ENCODE measurements at regions of chr7 and their contacts with region 1.

Region 1: DNA sequence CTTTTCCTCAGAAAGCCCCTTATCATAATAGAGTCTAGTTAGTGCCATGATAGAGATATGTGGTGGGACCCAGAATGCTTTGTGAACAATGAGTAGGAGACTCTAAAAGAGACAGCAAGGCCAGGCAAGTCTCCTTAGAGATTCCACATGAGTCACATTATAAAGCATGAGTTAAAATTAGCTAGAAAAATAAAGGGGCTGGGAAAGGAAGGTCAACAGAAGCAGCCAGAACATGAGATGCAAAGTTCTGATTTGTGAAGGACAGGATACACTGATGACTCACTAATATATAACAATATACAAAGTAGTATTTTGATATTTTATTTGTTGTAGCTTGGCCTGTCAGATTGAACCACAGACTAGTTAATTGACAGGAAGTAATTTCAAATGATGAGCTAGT is 25.3 kb upstream of the SNX13 start:
- DNase-seq: peak; percentile 78
- ATAC-seq: peak; percentile 84
- H3K4me3 ChIP-seq: no peak overlapping the region
- H3K27ac ChIP-seq: peak overlapping the region; percentile 38; the same call in 1 of the 2 replicates
- H3K4me1 ChIP-seq: peaks cover 29% of the 10 kb centered on the region
- H3K27me3 ChIP-seq: no peaks in the 10 kb centered on the region
- CTCF ChIP-seq: no peak

Region 2: GRCh38 chr7:17680943-17681351 is 284.7 kb before region 1 on chr7:
- CTCF ChIA-PET with region 1: no interaction called
- POLR2A ChIA-PET with region 1: no interaction called
- intact Hi-C with region 1: loop called (anchors 5 kb)
- DNase-seq: peak; percentile 79
- ATAC-seq: peak; percentile 29
- H3K4me3 ChIP-seq: peak overlapping the region; percentile 47; the same call in 1 of the 2 replicates
- H3K27ac ChIP-seq: peak overlapping the region; percentile 72
- H3K4me1 ChIP-seq: peaks cover 49% of the 10 kb centered on the region
- H3K27me3 ChIP-seq: no peaks in the 10 kb centered on the region
- CTCF ChIP-seq: peak; percentile 79

Region 3: GRCh38 chr7:17940302-17940883 is 25.2 kb before region 1 on chr7 and contains the start of gene SNX13:
- CTCF ChIA-PET with region 1: no interaction called
- POLR2A ChIA-PET with region 1: no interaction called
- intact Hi-C with region 1: loop called (anchors 1 kb)
- DNase-seq: peak; percentile 89
- ATAC-seq: peak; percentile 80
- H3K4me3 ChIP-seq: peak within 1 kb of the TSS; percentile 94
- H3K27ac ChIP-seq: peak within 1 kb of the TSS; percentile 71
- H3K4me1 ChIP-seq: peaks cover 37% of the 10 kb centered on the region
- H3K27me3 ChIP-seq: no peaks in the 10 kb centered on the region
- CTCF ChIP-seq: no peak; the same call in none of the 2 replicates
- total RNA-seq, gene SNX13: 26.1 and 33.9 TPM in 2 replicates

Region 4: GRCh38 chr7:17948503-17949238 is 16.9 kb before region 1 on chr7:
- CTCF ChIA-PET with region 1: no interaction called
- POLR2A ChIA-PET with region 1: no interaction called
- intact Hi-C with region 1: loop called (anchors 2 kb)
- DNase-seq: peak; percentile 65
- ATAC-seq: peak; percentile 87
- H3K4me3 ChIP-seq: no peak overlapping the region
- H3K27ac ChIP-seq: peak overlapping the region; percentile 10; the same call in 1 of the 2 replicates
- H3K4me1 ChIP-seq: peaks cover 18% of the 10 kb centered on the region
- H3K27me3 ChIP-seq: no peaks in the 10 kb centered on the region
- CTCF ChIP-seq: no peak

Region 5: DNA sequence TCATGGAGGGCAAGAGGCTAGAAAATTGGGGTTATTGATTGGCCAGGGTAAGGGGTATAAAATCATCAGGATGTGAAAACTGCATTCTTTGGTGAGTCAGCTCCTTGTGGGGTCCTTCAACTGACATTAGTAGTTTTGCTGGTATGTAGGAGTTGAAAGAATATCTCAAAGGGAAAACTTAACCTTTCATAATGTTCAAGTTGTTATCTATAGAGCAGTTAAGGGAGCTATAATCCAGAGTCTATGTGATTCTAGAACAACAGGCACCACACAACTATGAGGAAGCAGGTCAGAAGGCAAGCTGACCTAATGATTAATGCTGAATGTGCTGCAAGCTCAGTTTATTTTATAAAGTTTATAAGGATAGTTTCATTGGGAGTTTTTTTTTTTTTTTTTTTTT is 48.3 kb after region 1 on chr7:
- CTCF ChIA-PET with region 1: no interaction called
- POLR2A ChIA-PET with region 1: no interaction called
- intact Hi-C with region 1: no loop called
- DNase-seq: peak; percentile 68
- ATAC-seq: peak; percentile 95
- H3K4me3 ChIP-seq: no peak overlapping the region
- H3K27ac ChIP-seq: peak overlapping the region; percentile 52
- H3K4me1 ChIP-seq: peaks cover 25% of the 10 kb centered on the region
- H3K27me3 ChIP-seq: no peaks in the 10 kb centered on the region
- CTCF ChIP-seq: no peak

Region 6: GRCh38 chr7:18053177-18053928 is 87.8 kb after region 1 on chr7:
- CTCF ChIA-PET with region 1: no interaction called
- POLR2A ChIA-PET with region 1: no interaction called
- intact Hi-C with region 1: no loop called
- DNase-seq: peak; percentile 3
- ATAC-seq: no peak
- H3K4me3 ChIP-seq: no peak overlapping the region
- H3K27ac ChIP-seq: no peak overlapping the region
- H3K4me1 ChIP-seq: no peaks in the 10 kb centered on the region
- H3K27me3 ChIP-seq: no peaks in the 10 kb centered on the region
- CTCF ChIP-seq: no peak

Region 7: GRCh38 chr7:18086165-18087030 is 120.8 kb after region 1 on chr7:
- CTCF ChIA-PET with region 1: no interaction called
- POLR2A ChIA-PET with region 1: no interaction called
- intact Hi-C with region 1: loop called (anchors 5 kb)
- DNase-seq: peak; percentile 36
- ATAC-seq: peak; percentile 68
- H3K4me3 ChIP-seq: peak overlapping the region; percentile 95
- H3K27ac ChIP-seq: no peak overlapping the region
- H3K4me1 ChIP-seq: no peaks in the 10 kb centered on the region; the same call in 1 of the 2 replicates
- H3K27me3 ChIP-seq: no peaks in the 10 kb centered on the region
- CTCF ChIP-seq: no peak; the same call in 1 of the 2 replicates